ENCODE measurements at regions of chr20 and their contacts with region 1.

Region 1: GRCh38 chr20:19784511-19785172 is 26.6 kb downstream of the RIN2 start:
- DNase-seq: peak; percentile 66 to 72
- H3K4me3 ChIP-seq: no peak overlapping the region
- H3K27ac ChIP-seq: peak overlapping the region; percentile 53 to 80 (median 69)
- H3K4me1 ChIP-seq: peaks cover 27 to 36% of the 10 kb centered on the region in 2 donors
- H3K27me3 ChIP-seq: no peaks in the 10 kb centered on the region
- CTCF ChIP-seq: peak; percentile 21 to 91 (median 74)
- POLR2A ChIP-seq: no peak

Region 2: GRCh38 chr20:19692685-19693119 is 91.9 kb before region 1 on chr20:
- intact Hi-C with region 1: loop called (anchors 5 kb)
- DNase-seq: peak; percentile 46 to 58
- H3K4me3 ChIP-seq: no peak overlapping the region
- H3K27ac ChIP-seq: no peak overlapping the region
- H3K4me1 ChIP-seq: no peaks in the 10 kb centered on the region
- H3K27me3 ChIP-seq: no peaks in the 10 kb centered on the region
- CTCF ChIP-seq: peak; percentile 75 to 93 (median 92)
- POLR2A ChIP-seq: no peak

Region 3: GRCh38 chr20:20207872-20208271 is 423.2 kb after region 1 on chr20:
- intact Hi-C with region 1: no loop called
- DNase-seq: no peak
- H3K4me3 ChIP-seq: no peak overlapping the region
- H3K27ac ChIP-seq: no peak overlapping the region
- H3K4me1 ChIP-seq: no peaks in the 10 kb centered on the region
- H3K27me3 ChIP-seq: no peaks in the 10 kb centered on the region
- CTCF ChIP-seq: no peak
- POLR2A ChIP-seq: no peak